MCF 10A (cell line): ENCODE measurements at regions of chr10 and their contacts with region 1.

Region 1: DNA sequence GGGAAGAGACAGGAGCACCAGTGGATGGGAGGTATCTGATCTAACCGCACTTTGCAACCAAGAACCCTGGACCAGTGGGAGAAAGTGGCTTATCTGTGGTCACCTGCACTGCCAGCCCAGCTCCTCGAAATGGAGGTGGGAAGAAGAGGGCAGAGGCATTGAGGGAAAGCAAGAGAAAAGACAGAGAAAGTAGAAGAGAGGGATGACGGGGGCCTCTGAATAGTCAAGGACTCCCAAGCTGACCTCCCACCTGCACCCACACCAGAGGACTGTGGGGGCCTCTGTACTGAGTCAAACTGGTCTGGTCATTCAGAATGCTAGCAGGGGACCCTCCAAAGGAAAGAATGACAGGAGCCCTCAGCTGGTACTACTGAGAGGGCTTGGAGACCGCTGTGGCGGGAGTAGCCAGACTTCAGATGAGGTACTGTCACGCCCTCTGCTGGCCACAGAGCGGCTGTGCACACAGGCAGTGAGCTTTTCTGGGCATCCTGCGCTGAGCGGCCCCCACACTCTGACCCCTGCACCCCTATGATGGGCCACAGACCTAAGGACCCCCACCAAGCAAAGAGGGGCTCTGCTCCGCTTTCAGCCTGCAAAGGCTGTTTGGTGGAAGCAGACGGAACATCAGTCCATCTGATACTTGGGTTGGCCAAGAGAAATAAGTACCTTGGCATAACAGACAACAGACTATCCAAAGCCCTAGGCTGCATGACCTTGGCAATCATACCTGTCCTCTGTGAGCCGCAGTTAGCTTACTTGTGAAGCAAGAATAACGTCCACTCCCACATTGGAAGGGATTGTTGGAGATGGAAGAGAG is 112.9 kb downstream of the COL13A1 start:
- DNase-seq: peak; percentile 66
- H3K4me3 Mint-ChIP-seq: no peak overlapping the region
- H3K27ac Mint-ChIP-seq: no peak overlapping the region
- H3K4me1 Mint-ChIP-seq: no peaks in the 10 kb centered on the region
- H3K27me3 Mint-ChIP-seq: no peaks in the 10 kb centered on the region
- CTCF ChIP-seq: peak; percentile 96

Region 2: DNA sequence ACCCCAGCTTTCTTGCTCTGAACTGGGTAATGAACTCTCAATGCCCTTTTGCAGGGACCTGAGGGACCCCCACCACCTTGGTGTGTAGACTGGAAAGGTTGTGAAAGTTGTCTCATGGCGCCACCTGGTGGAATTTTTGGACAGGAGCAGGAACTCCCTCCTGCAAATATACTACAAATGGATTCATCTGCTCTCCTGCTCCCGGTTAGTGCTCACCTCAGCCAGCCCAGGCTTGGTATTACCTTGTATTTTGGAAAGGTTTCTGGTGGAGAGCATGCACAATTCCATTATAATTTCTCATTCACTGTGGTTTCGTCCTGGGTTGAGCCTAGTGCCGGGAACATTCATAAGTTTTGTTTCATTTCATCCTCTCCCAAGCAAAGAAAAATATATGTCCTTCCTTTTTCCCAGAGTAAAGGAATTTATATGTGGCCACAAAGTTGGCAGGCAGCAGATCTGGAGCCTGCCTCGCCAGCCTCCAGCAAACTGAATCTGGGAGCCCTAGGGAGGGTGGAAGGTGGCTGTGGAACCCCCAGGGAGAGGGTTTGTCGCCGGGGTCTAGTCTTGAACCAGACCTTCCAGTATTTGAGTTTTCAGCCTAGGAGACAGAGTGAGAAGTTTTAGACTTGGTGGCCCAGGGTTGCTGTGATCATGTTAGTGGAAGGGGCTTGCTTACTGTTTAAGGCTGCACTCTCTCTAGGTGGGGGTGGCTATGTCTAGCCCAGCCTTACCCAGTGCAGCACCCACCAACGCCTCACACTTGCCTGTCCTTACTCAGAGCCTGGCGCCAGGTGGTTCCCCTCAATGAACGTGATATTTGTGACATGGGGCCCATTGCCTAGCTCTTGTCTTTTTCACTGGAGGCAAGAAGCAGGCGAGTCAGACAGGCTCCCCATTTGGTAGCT is 275.1 kb before region 1 on chr10:
- CTCF ChIA-PET with region 1: interaction called, 35 read pairs
- POLR2A ChIA-PET with region 1: no interaction called
- intact Hi-C with region 1: loop called (anchors 1 kb)
- DNase-seq: peak; percentile 77
- H3K4me3 Mint-ChIP-seq: no peak overlapping the region
- H3K27ac Mint-ChIP-seq: no peak overlapping the region
- H3K4me1 Mint-ChIP-seq: peaks cover 23% of the 10 kb centered on the region
- H3K27me3 Mint-ChIP-seq: no peaks in the 10 kb centered on the region
- CTCF ChIP-seq: peak; percentile 84

Region 3: GRCh38 chr10:69696073-69696731 is 218.4 kb before region 1 on chr10:
- CTCF ChIA-PET with region 1: interaction called, 48 read pairs
- POLR2A ChIA-PET with region 1: no interaction called
- intact Hi-C with region 1: no loop called
- DNase-seq: peak; percentile 70
- H3K4me3 Mint-ChIP-seq: no peak overlapping the region
- H3K27ac Mint-ChIP-seq: no peak overlapping the region
- H3K4me1 Mint-ChIP-seq: no peaks in the 10 kb centered on the region
- H3K27me3 Mint-ChIP-seq: peaks cover 24% of the 10 kb centered on the region
- CTCF ChIP-seq: peak; percentile 69

Region 4: GRCh38 chr10:69800109-69800508 is 114.5 kb before region 1 on chr10:
- CTCF ChIA-PET with region 1: interaction called, 4 read pairs
- POLR2A ChIA-PET with region 1: no interaction called
- intact Hi-C with region 1: loop called (anchors 5 kb)
- DNase-seq: peak; percentile 75
- H3K4me3 Mint-ChIP-seq: no peak overlapping the region
- H3K27ac Mint-ChIP-seq: no peak overlapping the region
- H3K4me1 Mint-ChIP-seq: peaks cover 18% of the 10 kb centered on the region
- H3K27me3 Mint-ChIP-seq: no peaks in the 10 kb centered on the region
- CTCF ChIP-seq: peak; percentile 56

Region 5: DNA sequence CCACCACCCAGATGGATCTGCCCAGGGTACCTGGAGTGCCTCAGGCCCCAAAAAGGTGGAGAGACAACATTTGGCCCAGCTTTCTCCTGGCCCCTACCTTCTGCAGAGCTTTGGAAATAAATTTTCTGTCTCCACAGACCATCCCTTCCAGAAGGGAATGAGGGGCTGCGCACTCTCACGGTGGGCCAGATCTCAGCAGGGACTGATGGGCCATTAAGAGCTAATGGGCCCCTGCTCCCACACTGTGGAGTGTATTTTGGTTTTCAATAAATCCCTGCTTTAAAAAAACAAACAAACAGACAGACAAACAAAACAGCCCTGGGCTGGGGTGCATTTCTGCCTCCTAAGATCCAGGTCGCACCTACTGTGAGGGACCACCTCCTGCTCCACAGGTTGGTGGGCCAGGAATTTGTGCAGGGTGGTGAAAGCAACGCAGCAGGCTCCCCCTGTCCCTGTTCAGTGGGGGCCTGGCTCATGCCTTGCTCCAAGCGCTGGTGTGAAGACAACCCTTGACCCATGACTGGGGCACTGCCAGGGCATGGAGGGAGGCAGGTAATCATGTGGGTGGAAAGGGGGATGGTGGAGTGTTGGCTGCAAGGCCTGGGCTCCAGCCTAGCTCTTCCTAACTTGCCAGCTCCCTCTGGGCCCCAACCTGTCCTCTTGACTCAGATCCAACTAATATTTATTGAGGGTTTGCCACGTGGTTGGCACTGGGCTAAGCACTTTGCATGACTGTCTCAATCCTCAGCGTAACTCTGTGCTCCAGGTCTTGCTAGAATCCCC is 24.4 kb before region 1 on chr10:
- CTCF ChIA-PET with region 1: interaction called, 11 read pairs
- POLR2A ChIA-PET with region 1: no interaction called
- intact Hi-C with region 1: no loop called
- DNase-seq: no peak
- H3K4me3 Mint-ChIP-seq: no peak overlapping the region
- H3K27ac Mint-ChIP-seq: no peak overlapping the region
- H3K4me1 Mint-ChIP-seq: no peaks in the 10 kb centered on the region
- H3K27me3 Mint-ChIP-seq: no peaks in the 10 kb centered on the region
- CTCF ChIP-seq: no peak

Region 6: GRCh38 chr10:69929575-69929974 is 15.0 kb after region 1 on chr10:
- CTCF ChIA-PET with region 1: interaction called, 14 read pairs
- POLR2A ChIA-PET with region 1: no interaction called
- intact Hi-C with region 1: no loop called
- DNase-seq: no peak
- H3K4me3 Mint-ChIP-seq: no peak overlapping the region
- H3K27ac Mint-ChIP-seq: no peak overlapping the region
- H3K4me1 Mint-ChIP-seq: no peaks in the 10 kb centered on the region
- H3K27me3 Mint-ChIP-seq: peaks cover 14% of the 10 kb centered on the region
- CTCF ChIP-seq: no peak

Region 7: GRCh38 chr10:70197235-70197945 is 282.8 kb after region 1 on chr10:
- CTCF ChIA-PET with region 1: no interaction called
- POLR2A ChIA-PET with region 1: no interaction called
- intact Hi-C with region 1: no loop called
- DNase-seq: no peak
- H3K4me3 Mint-ChIP-seq: no peak overlapping the region
- H3K27ac Mint-ChIP-seq: no peak overlapping the region
- H3K4me1 Mint-ChIP-seq: peaks cover 17% of the 10 kb centered on the region
- H3K27me3 Mint-ChIP-seq: no peaks in the 10 kb centered on the region
- CTCF ChIP-seq: no peak

Region 8: DNA sequence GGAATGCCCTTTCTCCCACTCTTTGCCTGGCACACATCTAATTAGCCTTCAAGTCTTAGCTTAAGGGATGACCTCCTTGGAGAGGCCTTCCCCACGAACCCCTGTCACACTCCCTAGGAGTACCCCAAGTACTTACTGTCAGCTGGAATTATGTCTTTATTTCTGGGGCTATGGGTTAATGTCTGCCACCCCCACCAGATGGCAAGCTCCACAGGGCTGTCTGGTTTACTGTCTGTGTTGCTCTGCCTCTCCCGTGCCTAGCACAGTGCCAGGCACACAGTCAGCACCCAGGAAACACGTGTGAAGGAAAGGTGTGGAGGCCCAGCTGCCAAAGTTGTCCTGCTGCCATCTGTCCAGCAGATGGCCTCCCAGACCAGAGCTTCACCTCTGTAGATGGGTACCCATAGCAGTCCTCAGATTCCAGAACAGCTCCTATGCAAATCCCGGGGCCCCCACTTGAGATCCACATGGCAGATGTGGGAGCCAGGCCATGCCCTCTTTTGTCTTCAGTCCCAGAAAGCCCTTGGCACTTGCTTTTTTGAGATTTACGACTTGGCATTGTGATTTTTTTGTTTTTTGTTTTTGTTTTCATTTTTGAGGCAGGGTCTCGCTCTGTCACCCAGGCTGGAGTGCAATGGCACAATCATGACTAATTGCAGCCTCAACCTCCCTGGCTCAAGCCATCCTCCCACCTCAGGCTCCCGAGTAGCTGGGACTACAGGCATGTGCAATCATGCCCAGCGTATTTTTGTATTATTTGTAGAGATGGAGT is 546.8 kb after region 1 on chr10:
- CTCF ChIA-PET with region 1: no interaction called
- POLR2A ChIA-PET with region 1: no interaction called
- intact Hi-C with region 1: no loop called
- DNase-seq: peak; percentile 74
- H3K4me3 Mint-ChIP-seq: no peak overlapping the region
- H3K27ac Mint-ChIP-seq: no peak overlapping the region
- H3K4me1 Mint-ChIP-seq: peaks cover 23% of the 10 kb centered on the region
- H3K27me3 Mint-ChIP-seq: peaks cover 17% of the 10 kb centered on the region
- CTCF ChIP-seq: peak; percentile 85